Activated T-helper 2 cell treated with anti-CD3 and anti-CD28 coated beads, Interferon-gamma antibody, Interleukin-2, Interleukin-4, amounts not matched to agents 10 μg/mL and 5 μg/mL and 100 μg/mL, durations not matched to agents 14 hours and 24 hours and 36 hours (primary cell): ENCODE measurements at regions of chr3 and their contacts with region 1.

Region 1: DNA sequence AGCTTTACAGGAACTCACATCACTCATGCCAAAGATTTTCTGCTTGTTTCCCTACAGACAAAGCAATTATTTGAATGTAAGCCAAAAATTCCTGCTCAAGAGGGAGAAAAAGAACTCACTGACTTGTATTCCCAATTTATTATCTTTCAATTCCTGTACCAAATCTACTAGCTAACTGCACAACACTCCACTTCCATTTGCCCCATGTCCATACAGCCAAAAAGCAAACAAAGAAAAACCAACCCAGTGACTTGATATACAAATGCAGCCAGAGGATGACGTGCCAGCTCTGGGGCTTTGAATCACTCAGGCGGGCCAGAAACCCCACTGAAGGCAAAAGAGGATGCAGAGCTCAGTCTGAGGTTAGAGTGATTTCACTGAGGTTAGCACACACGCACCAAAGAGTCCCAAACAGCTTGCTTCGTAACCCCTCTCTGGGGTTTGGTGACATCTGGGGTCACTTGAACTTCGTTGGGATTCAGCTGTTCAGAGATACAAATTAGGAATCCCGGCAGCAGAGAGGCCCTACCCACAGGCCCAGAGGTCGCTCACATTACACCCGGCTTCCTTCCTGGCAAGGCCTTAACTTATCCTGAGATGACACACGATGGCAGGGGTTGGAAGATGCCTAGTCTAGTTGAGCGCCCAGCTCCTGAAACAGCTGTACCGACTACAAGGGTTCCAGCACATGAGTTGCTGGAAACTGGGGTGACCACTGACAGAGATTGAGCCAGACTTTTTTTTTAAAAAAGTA is 1.6 kb downstream of the RFTN1 start:
- DNase-seq: peak; percentile 72
- H3K4me3 Mint-ChIP-seq: peak overlapping the region; percentile 91
- H3K27ac Mint-ChIP-seq: peak overlapping the region; percentile 85
- H3K4me1 Mint-ChIP-seq: peaks cover 72% of the 10 kb centered on the region
- H3K27me3 Mint-ChIP-seq: no peaks in the 10 kb centered on the region

Region 2: GRCh38 chr3:15659254-15659975 is 852.4 kb before region 1 on chr3:
- intact Hi-C with region 1: no loop called
- DNase-seq: no peak
- H3K4me3 Mint-ChIP-seq: no peak overlapping the region
- H3K27ac Mint-ChIP-seq: no peak overlapping the region
- H3K4me1 Mint-ChIP-seq: peaks cover 16% of the 10 kb centered on the region
- H3K27me3 Mint-ChIP-seq: no peaks in the 10 kb centered on the region

Region 3: DNA sequence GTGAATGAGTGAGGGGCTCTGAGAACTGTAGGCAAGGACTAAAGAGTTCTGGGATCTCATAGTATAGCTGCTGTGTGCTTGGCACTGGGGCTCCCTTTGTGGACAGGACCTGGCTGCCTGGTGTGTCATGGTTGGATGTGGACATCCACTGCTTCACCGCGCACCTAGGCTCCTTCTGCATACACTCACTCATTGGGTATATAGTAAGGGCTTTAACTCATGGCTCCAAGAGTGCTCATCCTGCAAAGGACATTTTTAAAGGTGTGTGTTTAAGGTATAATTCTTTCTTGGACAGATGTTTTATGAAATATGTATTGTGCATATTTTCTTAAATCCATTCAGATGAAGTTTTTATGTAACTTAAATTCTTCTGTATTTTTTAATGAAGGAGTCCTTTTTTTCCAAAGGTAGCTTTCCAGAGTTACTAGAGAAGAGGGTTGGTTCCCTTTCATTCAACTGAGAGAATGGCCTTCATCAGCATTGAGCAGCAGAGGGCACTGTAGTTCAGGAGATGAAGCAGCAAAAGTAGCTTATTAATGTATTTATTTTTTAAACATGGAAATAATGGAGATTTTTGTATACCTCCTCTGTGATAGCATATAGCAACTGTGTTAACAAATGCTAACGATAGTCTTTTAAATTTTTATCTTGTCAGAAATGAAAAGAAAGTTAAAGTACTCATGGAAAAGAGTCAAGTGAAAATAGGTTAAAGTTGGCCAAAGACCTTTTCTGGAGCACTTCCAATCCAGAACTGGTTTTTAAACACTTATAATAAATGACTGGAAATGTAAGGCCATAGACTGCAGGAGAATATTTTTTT is 221.6 kb before region 1 on chr3:
- intact Hi-C with region 1: loop called (anchors 2 kb)
- DNase-seq: no peak
- H3K4me3 Mint-ChIP-seq: peak overlapping the region; percentile 82
- H3K27ac Mint-ChIP-seq: peak overlapping the region; percentile 68
- H3K4me1 Mint-ChIP-seq: peaks cover 80% of the 10 kb centered on the region
- H3K27me3 Mint-ChIP-seq: no peaks in the 10 kb centered on the region

Region 4: DNA sequence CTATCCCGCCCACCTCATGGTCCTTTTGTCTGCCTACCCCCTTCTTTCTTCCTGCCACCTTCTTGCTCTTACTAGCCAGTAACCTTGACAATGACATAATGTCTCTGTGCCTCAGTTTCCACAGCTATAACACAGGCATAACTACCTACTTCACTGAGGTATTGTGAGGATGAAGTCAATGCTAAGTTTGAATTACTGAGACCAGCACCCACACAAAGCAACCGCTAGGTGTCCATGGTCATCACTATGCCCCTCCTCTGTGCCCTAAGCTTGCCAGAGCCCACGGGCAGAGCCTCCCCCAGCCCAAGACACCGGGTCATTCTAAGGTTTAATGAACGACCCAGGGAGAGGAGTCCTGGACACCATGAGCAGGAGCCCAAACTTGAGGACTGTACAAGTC is 145.3 kb before region 1 on chr3:
- intact Hi-C with region 1: no loop called
- DNase-seq: no peak
- H3K4me3 Mint-ChIP-seq: no peak overlapping the region
- H3K27ac Mint-ChIP-seq: no peak overlapping the region
- H3K4me1 Mint-ChIP-seq: peaks cover 30% of the 10 kb centered on the region
- H3K27me3 Mint-ChIP-seq: no peaks in the 10 kb centered on the region

Region 5: DNA sequence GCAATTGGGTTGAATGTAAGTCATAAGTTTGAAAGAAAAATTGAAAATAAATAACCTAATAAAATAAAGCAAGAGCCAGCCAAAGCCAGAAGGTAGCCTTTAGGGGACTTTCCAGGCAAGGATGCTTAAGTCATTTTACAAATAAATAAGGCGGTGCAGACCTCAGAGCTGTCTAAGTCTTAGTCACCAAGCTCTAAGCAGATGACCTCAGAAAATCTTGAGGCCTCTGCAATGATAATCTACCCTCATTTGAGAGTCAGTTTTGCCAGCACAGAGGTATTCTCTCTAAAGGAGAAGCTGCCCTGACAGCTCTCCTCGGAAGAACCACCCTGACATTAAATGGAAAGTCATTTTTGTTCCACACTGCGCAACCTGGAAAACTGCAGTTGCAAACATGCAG is 132.9 kb before region 1 on chr3:
- intact Hi-C with region 1: loop called (anchors 2 kb)
- DNase-seq: no peak
- H3K4me3 Mint-ChIP-seq: no peak overlapping the region
- H3K27ac Mint-ChIP-seq: peak overlapping the region; percentile 80
- H3K4me1 Mint-ChIP-seq: peaks cover 69% of the 10 kb centered on the region
- H3K27me3 Mint-ChIP-seq: no peaks in the 10 kb centered on the region

Region 6: GRCh38 chr3:16467393-16467792 is 44.5 kb before region 1 on chr3:
- intact Hi-C with region 1: loop called (anchors 1 kb)
- DNase-seq: peak; percentile 48
- H3K4me3 Mint-ChIP-seq: peak overlapping the region; percentile 74
- H3K27ac Mint-ChIP-seq: peak overlapping the region; percentile 93
- H3K4me1 Mint-ChIP-seq: peaks cover 64% of the 10 kb centered on the region
- H3K27me3 Mint-ChIP-seq: no peaks in the 10 kb centered on the region

Region 7: GRCh38 chr3:16550676-16551341 is 39.0 kb after region 1 on chr3:
- intact Hi-C with region 1: loop called (anchors 2 kb)
- DNase-seq: peak; percentile 64
- H3K4me3 Mint-ChIP-seq: no peak overlapping the region
- H3K27ac Mint-ChIP-seq: peak overlapping the region; percentile 24
- H3K4me1 Mint-ChIP-seq: peaks cover 11% of the 10 kb centered on the region
- H3K27me3 Mint-ChIP-seq: peaks cover 6% of the 10 kb centered on the region